GM10248 (cell line): ENCODE measurements at regions of chr12 and their contacts with region 1.

Region 1: GRCh38 chr12:92136965-92137721 is 8.5 kb downstream of the BTG1 start:
- DNase-seq: no peak
- CTCF ChIP-seq: no peak

Region 2: DNA sequence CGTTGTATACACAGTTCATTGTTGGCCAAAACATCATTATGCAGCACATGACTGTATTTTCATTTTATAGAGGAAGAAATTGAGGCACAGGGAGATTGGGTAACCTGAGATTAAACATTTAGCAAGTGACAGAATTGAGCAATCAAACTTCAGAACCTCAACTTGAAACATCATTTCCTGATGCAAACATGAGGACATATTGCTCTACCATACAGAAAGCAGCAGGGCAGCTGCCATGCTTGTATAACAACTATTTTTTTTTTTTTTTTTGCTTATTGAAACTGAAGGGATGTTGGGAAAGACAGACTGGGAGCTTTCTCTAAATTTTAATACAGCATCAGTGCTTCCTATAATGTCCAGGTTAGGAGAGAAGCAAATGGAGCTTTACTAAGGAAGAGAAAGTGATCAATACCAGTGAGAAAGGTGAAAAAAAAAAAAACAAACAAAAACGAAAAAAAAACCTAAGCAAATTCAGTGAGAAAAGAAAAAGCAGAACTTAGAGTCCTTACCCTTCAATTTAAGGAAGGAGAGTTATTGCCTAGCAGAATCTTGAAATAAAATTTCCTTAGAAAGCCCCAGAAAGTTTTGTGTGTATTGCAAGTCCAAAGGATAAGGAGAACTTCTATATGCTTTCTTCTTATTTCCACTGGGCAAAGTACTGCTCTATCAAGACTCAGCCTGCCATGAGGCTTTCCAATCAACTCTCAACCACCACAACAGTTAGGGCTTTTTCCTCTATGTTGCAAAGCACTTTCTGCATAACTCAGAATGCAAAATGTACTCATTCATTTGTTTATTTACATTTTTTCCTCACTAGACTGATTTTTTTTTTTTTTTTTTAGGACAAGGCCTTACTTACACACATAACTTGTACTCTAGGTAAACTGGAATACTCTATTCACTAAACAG is 13.1 kb before region 1 on chr12:
- CTCF ChIA-PET with region 1: interaction called, 13 read pairs
- POLR2A ChIA-PET with region 1: interaction called, 6 read pairs
- DNase-seq: no peak
- CTCF ChIP-seq: no peak

Region 3: GRCh38 chr12:92164712-92165111 is 27.6 kb after region 1 on chr12:
- CTCF ChIA-PET with region 1: no interaction called
- POLR2A ChIA-PET with region 1: no interaction called
- DNase-seq: no peak
- CTCF ChIP-seq: no peak